Aorta (tissue), 5 donors: ENCODE measurements at regions of chr9 and their contacts with region 1.

Region 1: GRCh38 chr9:101530077-101530711 is 3.5 kb upstream of the RNF20 start:
- DNase-seq: peak in 1 of 2 donors; percentile 52
- ATAC-seq: peak; percentile 68
- H3K4me3 ChIP-seq: no peak overlapping the region
- H3K27ac ChIP-seq: no peak overlapping the region
- H3K4me1 ChIP-seq: no peaks in the 10 kb centered on the region
- H3K27me3 ChIP-seq: no peaks in the 10 kb centered on the region

Region 2: DNA sequence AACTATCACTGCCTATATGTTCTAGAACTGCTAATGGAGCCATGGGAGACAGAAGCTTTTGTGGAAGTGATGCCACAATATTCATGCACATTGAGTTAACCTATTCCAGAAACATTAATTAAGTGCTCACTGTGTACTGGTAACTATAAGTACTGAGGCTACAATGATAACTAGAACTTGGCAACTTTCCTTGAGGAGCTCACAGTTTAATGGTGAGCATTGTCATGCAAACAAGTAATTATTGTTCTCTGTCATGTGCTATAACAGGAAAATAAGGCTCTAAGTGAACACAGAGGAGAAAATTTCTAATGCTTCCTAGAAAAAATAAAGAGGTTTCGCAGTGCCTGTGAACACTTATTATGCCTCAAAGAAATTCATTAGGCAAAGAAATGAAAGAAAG is 287.5 kb before region 1 on chr9:
- intact Hi-C with region 1: no loop called
- DNase-seq: no peak
- ATAC-seq: no peak
- H3K4me3 ChIP-seq: no peak overlapping the region
- H3K27ac ChIP-seq: no peak overlapping the region
- H3K4me1 ChIP-seq: no peaks in the 10 kb centered on the region
- H3K27me3 ChIP-seq: no peaks in the 10 kb centered on the region

Region 3: DNA sequence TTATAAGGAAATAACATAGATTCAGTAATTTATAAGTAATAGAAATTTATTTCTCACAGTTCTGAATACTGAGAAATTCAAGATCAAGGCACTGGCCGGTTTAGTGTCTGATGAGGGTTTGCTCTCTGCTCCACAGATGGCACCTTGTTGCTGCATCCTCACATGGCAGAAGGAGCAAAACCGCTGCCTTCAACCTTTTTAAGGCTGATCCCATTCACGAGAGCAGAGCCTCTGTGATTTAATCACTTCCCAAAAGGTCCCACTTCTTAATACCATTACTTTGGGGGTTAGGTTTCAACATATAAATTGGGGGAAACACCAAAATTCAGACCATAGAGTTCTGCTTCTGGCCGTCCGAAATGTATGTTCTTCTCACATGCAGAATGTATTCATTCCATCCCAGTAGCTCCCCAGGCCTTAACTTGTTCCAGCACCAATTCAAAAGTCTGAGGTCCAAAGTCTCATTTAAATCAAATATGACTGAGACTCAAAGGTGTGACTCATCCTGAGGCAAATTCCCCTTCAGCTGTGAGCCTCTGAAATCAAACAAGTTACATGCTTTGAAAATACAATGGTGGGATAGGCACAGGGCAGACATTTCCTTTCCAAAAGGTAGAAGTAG is 175.9 kb before region 1 on chr9:
- intact Hi-C with region 1: no loop called
- DNase-seq: no peak
- ATAC-seq: no peak
- H3K4me3 ChIP-seq: no peak overlapping the region
- H3K27ac ChIP-seq: no peak overlapping the region
- H3K4me1 ChIP-seq: no peaks in the 10 kb centered on the region
- H3K27me3 ChIP-seq: peaks cover 0 to 3% of the 10 kb centered on the region in 2 donors

Region 4: DNA sequence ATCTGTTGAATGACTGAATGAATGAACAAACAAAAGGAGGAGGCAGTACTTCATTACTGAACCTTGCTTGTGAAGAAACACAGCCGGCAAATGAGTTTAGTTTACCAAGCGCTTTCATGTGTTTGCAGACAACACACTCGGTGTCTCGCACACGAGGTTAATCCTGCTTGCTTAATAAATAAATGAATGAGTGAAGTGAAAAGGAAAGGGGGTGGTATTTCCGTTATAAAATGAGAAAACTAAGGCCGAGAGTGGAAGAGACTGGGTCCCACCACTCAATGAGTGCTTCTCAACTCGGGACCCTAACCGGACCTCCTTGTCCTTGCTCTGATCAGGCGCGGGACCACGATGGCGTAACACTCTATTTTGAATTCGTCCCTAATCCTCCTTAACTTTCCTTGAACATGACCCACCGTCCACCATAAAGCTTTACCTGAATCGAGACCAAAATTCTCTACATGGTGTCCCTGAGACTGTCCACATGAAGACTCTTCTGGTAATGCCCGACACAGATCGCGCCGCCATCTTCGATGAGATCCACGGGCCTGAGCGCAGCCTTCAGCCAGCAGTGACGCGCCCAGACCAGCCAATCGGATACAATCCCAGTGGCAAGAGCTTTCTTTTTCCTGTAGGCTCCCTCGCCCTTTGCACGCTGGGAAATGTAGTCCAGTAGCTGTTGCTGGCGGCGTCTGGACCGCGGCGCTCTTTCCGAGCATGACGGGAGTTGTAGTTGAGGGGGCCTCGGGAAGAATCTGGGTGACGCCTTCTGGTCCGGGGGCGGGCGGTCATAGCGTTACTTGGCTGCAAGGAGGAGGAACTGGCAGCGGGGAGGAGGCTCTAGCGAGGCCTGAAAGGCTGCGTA is 131.9 kb before region 1 on chr9 and contains the starts of genes MRPL50 and ZNF189:
- intact Hi-C with region 1: loop called in 1 of 2 experiments (anchors 5 kb)
- DNase-seq: peak; percentile 99
- ATAC-seq: peak; percentile 100
- H3K4me3 ChIP-seq: peak within 1 kb of the TSS; percentile 90 to 99
- H3K27ac ChIP-seq: peak within 1 kb of the TSS in 1 of 2 donors; percentile 73
- H3K4me1 ChIP-seq: peaks cover 0 to 5% of the 10 kb centered on the region in 2 donors
- H3K27me3 ChIP-seq: no peaks in the 10 kb centered on the region
- total RNA-seq, gene MRPL50: 7.6 to 8.9 TPM
- total RNA-seq, gene ZNF189: 20.4 to 23.3 TPM

Region 5: DNA sequence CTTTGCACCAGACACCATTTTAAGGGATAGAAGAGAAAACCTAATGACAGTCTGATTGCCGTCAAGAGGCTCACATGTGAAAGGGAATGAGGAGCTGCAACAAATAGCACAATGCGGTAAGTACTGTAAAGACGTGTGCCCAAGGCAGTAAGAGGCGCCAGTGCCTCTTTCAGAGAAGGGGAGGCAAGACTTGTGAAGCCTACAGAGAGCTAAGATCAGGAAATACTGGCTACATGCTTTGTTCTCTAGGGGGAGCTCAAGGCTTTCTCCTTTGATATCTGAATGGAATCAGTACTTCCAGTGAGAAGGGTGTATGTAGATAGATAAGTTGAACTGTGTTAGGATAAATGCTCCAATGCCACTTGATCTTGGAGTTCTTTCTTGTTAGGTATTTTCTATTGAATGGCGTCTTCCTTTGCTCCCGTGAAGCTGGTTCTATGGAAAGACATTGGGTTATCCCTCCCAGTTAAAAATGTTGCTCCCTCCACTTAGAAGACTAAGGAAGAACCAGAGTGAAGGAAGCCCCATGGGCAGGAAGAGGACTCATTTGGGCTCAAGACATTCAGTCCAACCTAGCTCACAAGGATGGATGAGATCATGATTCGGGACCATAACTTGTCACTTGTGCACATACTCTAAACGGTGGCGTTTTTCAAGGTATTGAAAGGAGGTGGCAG is 71.1 kb before region 1 on chr9:
- intact Hi-C with region 1: loop called (anchors 1 to 2 kb)
- DNase-seq: no peak
- ATAC-seq: peak; percentile 76
- H3K4me3 ChIP-seq: no peak overlapping the region
- H3K27ac ChIP-seq: no peak overlapping the region
- H3K4me1 ChIP-seq: peaks cover 0 to 1% of the 10 kb centered on the region in 2 donors
- H3K27me3 ChIP-seq: no peaks in the 10 kb centered on the region

Region 6: GRCh38 chr9:101977614-101978210 is 447.5 kb after region 1 on chr9:
- intact Hi-C with region 1: no loop called
- DNase-seq: no peak
- ATAC-seq: no peak
- H3K4me3 ChIP-seq: no peak overlapping the region
- H3K27ac ChIP-seq: no peak overlapping the region
- H3K4me1 ChIP-seq: no peaks in the 10 kb centered on the region
- H3K27me3 ChIP-seq: no peaks in the 10 kb centered on the region